PC-3 (cell line): ENCODE measurements at regions of chr2 and their contacts with region 1.

Region 1: GRCh38 chr2:159124441-159124911 is 156.0 kb downstream of the TANC1 start:
- DNase-seq: peak; percentile 75
- ATAC-seq: peak; percentile 83
- H3K4me3 ChIP-seq: peak overlapping the region; percentile 17; the same call in 1 of the 2 replicates
- H3K27ac ChIP-seq: peak overlapping the region; percentile 95
- H3K4me1 ChIP-seq: peaks cover 39% of the 10 kb centered on the region
- H3K27me3 ChIP-seq: no peaks in the 10 kb centered on the region
- CTCF ChIP-seq: no peak

Region 2: DNA sequence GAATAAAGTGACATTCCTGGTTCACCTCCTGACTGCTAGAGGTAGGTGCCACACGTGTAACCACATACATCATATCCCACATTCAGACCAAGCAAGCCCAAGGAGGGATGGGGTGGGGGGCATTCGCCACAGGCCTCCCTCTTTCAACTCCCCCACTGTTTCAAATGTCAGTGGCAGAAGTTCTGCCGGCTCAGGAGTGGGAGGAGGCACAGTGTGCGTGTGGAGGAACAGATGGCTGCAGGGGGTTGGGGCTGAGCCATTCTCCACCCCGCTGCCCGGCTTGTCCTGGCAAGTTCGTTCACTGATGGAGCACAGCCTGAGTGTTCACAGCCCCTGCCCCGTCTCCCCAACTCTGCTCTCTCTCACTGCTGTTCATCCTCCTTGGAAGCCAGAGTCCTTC is 231.4 kb before region 1 on chr2:
- CTCF ChIA-PET with region 1: no interaction called
- POLR2A ChIA-PET with region 1: no interaction called
- intact Hi-C with region 1: no loop called
- DNase-seq: no peak
- ATAC-seq: no peak
- H3K4me3 ChIP-seq: no peak overlapping the region
- H3K27ac ChIP-seq: no peak overlapping the region
- H3K4me1 ChIP-seq: peaks cover 9% of the 10 kb centered on the region
- H3K27me3 ChIP-seq: no peaks in the 10 kb centered on the region
- CTCF ChIP-seq: no peak

Region 3: DNA sequence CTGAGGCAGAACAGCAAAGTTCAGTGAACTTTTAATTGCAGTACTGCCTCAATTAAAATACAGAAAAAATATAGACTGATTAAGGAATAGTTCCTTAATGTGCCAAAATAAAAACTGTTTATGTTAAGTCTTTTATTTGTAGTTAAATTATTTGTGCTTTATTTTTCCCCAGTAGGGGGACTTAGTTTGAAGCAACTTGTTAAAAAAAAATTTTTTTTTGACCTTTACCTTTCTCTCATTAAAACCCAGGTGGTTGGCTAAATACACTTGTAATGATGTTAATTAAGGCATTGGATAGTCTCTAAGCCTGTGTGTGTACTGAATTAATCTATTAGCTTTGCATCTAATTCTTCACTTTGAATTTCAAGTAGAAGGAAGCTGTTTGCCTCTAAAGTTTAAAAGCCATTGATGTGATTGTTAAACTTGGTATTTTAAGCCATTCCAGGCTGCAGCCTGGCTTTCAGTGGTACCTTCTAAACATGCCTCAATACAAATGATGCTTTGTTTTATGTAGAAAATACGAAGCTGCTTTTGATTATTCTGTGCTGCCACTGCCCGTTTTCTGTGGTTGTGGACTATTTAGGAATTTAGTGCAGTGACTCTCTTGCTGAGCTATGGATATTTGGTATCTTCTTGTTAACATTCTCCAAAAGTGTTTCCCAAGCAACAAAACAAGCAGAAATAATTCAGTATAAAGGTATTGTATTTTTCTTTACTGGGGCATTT is 53.1 kb before region 1 on chr2:
- CTCF ChIA-PET with region 1: no interaction called
- POLR2A ChIA-PET with region 1: no interaction called
- intact Hi-C with region 1: no loop called
- DNase-seq: no peak
- ATAC-seq: no peak
- H3K4me3 ChIP-seq: no peak overlapping the region
- H3K27ac ChIP-seq: no peak overlapping the region
- H3K4me1 ChIP-seq: peaks cover 44% of the 10 kb centered on the region
- H3K27me3 ChIP-seq: no peaks in the 10 kb centered on the region
- CTCF ChIP-seq: no peak; the same call in 1 of the 2 replicates

Region 4: DNA sequence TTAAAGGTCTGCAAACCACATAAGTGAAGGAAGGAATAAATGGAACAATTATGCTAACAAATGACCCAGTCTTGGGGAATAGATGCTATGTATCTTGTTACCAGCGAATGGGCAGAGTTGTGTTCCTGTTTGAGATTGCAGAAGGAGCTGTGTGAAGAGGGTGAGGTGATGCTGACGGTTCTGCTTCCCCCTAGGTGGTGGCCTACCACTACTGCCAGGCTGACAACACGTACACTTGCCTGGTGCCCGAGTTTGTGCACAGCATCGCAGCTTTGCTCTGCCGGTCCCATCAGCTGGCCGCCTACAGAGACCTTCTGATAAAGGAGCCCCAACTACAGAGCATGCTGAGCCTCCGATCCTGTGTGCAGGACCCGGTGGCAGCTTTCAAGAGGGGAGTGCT is 50.3 kb after region 1 on chr2:
- CTCF ChIA-PET with region 1: no interaction called
- POLR2A ChIA-PET with region 1: interaction called, 3 read pairs
- intact Hi-C with region 1: loop called (anchors 5 kb)
- DNase-seq: no peak
- ATAC-seq: no peak
- H3K4me3 ChIP-seq: no peak overlapping the region
- H3K27ac ChIP-seq: no peak overlapping the region
- H3K4me1 ChIP-seq: no peaks in the 10 kb centered on the region
- H3K27me3 ChIP-seq: no peaks in the 10 kb centered on the region
- CTCF ChIP-seq: no peak